ENCODE measurements at regions of chr20 and their contacts with region 1.

Region 1: GRCh38 chr20:57432874-57433491 is 41.8 kb downstream of the RBM38 start:
- DNase-seq: peak; percentile 85
- H3K4me3 Mint-ChIP-seq: peak overlapping the region; percentile 18
- H3K27ac Mint-ChIP-seq: peak overlapping the region; percentile 87
- H3K4me1 Mint-ChIP-seq: peaks cover 58% of the 10 kb centered on the region
- H3K27me3 Mint-ChIP-seq: no peaks in the 10 kb centered on the region

Region 2: GRCh38 chr20:57323034-57323433 is 109.9 kb before region 1 on chr20:
- CTCF ChIA-PET with region 1: no interaction called
- intact Hi-C with region 1: no loop called
- DNase-seq: peak; percentile 9
- H3K4me3 Mint-ChIP-seq: no peak overlapping the region
- H3K27ac Mint-ChIP-seq: no peak overlapping the region
- H3K4me1 Mint-ChIP-seq: no peaks in the 10 kb centered on the region
- H3K27me3 Mint-ChIP-seq: peaks cover 34% of the 10 kb centered on the region

Region 3: GRCh38 chr20:57391074-57391554 is 41.9 kb before region 1 on chr20 and contains the start of gene RBM38:
- CTCF ChIA-PET with region 1: interaction called, 3 read pairs
- intact Hi-C with region 1: loop called (anchors 1 kb)
- DNase-seq: peak; percentile 80
- H3K4me3 Mint-ChIP-seq: peak within 1 kb of the TSS; percentile 90
- H3K27ac Mint-ChIP-seq: peak within 1 kb of the TSS; percentile 97
- H3K4me1 Mint-ChIP-seq: peaks cover 46% of the 10 kb centered on the region
- H3K27me3 Mint-ChIP-seq: no peaks in the 10 kb centered on the region
- total RNA-seq, gene RBM38: 60.3 to 63.1 TPM

Measured in activated naive CD4-positive, alpha-beta T cell treated with anti-CD3 and anti-CD28 coated beads for 36 hours (primary cell).